A673 (cell line): ENCODE measurements at regions of chr2 and their contacts with region 1.

Region 1: GRCh38 chr2:27016801-27017325 is 15.9 kb upstream of the TMEM214 start:
- DNase-seq: peak; percentile 92
- H3K4me3 ChIP-seq: no peak overlapping the region
- H3K27ac ChIP-seq: peak overlapping the region; percentile 74
- H3K4me1 ChIP-seq: peaks cover 21% of the 10 kb centered on the region
- H3K27me3 ChIP-seq: no peaks in the 10 kb centered on the region
- CTCF ChIP-seq: peak; percentile 82

Region 2: DNA sequence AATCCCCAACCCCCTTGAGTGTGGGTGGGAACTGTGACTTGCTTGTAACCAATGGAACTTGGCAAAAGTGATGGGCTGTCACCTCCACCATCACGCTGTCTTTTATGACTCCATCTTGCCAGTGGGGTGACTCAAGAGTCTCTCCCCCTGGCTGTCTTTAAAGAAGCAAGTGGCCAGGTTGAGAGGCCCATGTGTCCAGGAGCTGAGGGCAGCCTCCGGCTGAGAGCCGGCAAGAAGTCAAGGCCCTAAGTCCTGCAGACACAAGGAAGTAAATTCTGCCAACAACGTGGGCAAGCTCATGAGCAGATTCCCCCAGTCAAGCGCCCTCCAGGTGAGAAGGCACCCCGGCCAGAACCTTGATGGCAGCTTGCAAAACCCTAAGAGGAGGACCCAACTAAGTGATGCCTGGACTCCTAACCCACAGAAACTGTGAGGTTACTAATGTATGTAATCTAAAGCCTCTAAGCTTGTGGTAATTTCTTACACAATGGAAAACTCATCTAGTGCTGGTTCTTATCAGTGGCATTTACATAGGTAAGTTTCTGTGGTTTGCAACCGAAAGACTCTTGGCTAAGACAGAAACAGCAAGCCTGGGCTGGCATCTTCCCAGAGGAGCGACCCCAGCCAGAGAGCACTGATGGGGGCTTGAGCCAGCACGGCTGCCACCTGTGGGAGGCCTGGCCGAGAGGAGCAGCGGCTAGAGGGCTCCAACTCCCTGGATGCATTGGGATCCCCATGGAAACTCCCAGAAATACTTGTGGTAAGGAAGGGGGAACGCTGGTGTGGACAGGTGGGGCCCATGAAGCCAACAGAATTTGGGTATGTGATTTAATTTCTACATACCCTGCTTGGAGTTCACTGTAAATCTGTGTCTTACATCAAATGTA is 425.0 kb before region 1 on chr2:
- CTCF ChIA-PET with region 1: interaction called, 13 read pairs
- POLR2A ChIA-PET with region 1: no interaction called
- intact Hi-C with region 1: no loop called
- DNase-seq: no peak
- H3K4me3 ChIP-seq: no peak overlapping the region
- H3K27ac ChIP-seq: no peak overlapping the region
- H3K4me1 ChIP-seq: no peaks in the 10 kb centered on the region
- H3K27me3 ChIP-seq: peaks cover 27% of the 10 kb centered on the region
- CTCF ChIP-seq: no peak

Region 3: DNA sequence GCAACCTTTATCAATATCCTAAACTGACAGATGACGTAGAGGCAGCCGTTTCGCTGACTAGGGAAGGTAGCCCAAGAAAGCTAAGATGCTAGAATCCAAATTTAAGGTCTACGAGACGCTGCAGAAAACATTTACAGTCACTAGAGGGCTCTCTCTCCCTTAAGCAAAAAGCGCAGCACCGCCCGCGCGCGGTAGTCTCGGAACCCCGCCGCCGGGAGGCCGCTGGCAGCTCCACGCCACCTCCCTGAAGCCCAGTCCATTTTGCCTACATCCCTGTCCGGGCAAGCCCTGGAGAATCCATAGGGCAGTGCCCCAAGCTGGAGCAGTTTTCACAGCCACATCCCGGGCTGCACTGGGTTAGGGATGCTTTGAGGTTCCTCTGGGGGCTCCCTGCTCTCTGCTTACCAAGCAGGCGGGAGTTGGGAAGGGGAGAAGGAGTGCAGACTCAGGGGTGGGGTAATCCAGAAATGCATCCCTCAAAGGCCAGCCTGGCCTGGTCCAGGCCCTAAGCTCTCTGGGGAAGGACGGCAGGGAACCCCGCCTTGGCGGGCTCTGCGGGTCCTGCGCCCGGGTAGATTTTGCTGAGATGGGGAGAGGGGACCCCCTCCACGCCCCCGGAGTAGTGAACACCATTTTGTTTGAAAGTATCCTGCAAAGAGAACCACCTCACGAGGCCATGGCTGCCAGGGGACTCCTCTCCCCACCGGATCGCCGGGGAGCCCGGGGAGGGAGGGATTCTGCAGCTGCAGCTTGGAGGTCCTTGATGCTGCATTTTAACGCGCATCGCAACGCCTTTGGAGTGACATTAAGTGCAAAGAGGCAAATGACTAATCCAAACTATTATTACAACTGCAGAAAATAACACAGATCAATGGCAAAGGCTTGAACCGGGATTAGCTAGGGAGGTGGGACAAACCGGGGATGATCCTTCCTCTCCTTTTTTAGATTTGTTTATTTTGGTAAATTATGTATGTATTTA is 170.2 kb before region 1 on chr2:
- CTCF ChIA-PET with region 1: interaction called, 53 read pairs
- POLR2A ChIA-PET with region 1: no interaction called
- intact Hi-C with region 1: loop called (anchors 2 kb)
- DNase-seq: peak; percentile 92
- H3K4me3 ChIP-seq: peak overlapping the region; percentile 97
- H3K27ac ChIP-seq: no peak overlapping the region
- H3K4me1 ChIP-seq: peaks cover 25% of the 10 kb centered on the region
- H3K27me3 ChIP-seq: peaks cover 7% of the 10 kb centered on the region
- CTCF ChIP-seq: peak; percentile 91

Region 4: DNA sequence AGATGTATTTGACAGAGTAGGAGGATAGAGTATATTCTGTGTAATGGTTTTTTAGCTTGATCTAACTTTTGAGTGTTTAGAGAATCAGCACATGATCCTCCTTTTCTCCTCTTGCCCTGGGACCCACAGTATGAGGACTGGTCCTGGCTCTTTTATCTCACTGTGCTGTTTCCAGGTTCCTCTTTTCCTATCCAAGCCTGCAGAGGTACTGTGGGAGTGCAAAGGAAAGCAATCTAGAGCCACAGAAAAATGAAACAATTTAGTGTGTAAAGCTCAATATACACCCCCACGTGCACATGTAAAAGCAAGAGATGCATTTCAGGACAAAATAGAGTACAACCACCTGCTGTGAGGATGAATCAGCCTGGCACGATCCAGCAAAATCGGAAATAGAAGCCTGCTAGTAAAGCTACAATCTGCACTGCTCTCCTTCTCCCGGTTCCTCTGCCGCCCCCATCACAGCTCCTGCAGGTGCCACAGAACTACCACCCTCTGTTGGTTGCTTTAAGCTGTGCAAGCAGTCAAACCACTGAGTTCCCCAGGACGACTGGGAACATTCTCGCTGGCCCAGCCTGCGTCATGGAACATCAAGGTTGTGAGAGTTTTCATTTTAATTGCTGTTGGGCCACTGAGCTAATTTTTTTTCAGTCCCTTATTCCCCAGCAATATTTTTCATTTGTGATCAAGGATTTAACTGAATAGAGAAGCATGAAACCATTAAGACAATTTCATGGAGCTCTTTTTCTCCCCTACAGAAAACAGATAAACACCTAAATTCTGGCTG is 94.3 kb before region 1 on chr2:
- CTCF ChIA-PET with region 1: interaction called, 25 read pairs
- POLR2A ChIA-PET with region 1: no interaction called
- intact Hi-C with region 1: no loop called
- DNase-seq: peak; percentile 92
- H3K4me3 ChIP-seq: no peak overlapping the region
- H3K27ac ChIP-seq: peak overlapping the region; percentile 34
- H3K4me1 ChIP-seq: peaks cover 25% of the 10 kb centered on the region
- H3K27me3 ChIP-seq: no peaks in the 10 kb centered on the region
- CTCF ChIP-seq: peak; percentile 89

Region 5: GRCh38 chr2:26970244-26970920 is 46.5 kb before region 1 on chr2 and contains the start of gene MAPRE3:
- CTCF ChIA-PET with region 1: interaction called, 11 read pairs
- POLR2A ChIA-PET with region 1: no interaction called
- intact Hi-C with region 1: no loop called
- DNase-seq: peak; percentile 82
- H3K4me3 ChIP-seq: peak within 1 kb of the TSS; percentile 75
- H3K27ac ChIP-seq: no peak within 1 kb of the TSS
- H3K4me1 ChIP-seq: peaks cover 6% of the 10 kb centered on the region
- H3K27me3 ChIP-seq: peaks cover 14% of the 10 kb centered on the region
- CTCF ChIP-seq: no peak
- total RNA-seq, gene MAPRE3: 8.4 and 9.0 TPM in 2 replicates